ENCODE measurements at regions of chr1 and their contacts with region 1.

Region 1: DNA sequence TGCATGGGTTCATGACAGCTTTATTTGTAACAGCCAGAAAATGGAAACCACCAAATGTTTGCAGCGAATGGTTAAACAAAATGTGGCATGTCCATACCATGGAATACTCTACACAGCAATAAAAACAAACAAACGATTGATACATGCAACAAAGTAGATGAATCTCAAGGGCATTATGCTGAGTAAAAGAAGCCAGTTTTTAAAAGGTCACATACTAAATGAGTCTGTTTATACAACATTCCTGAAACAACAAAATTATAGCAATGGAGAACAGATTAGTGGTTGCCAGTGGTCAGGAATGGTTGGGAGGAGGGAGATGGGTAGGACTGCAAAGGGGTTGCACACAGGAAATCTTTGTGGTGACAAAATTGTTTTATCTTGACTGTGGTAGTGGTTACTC is 202.4 kb upstream of the UBE2U start:
- DNase-seq: no peak
- H3K4me3 Mint-ChIP-seq: no peak overlapping the region
- H3K27ac Mint-ChIP-seq: no peak overlapping the region
- H3K4me1 Mint-ChIP-seq: no peaks in the 10 kb centered on the region
- H3K27me3 Mint-ChIP-seq: peaks cover 8% of the 10 kb centered on the region

Region 2: GRCh38 chr1:64038965-64039926 is 38.2 kb after region 1 on chr1:
- CTCF ChIA-PET with region 1: no interaction called
- POLR2A ChIA-PET with region 1: no interaction called
- intact Hi-C with region 1: loop called (anchors 1 kb)
- DNase-seq: no peak
- H3K4me3 Mint-ChIP-seq: no peak overlapping the region
- H3K27ac Mint-ChIP-seq: no peak overlapping the region
- H3K4me1 Mint-ChIP-seq: no peaks in the 10 kb centered on the region
- H3K27me3 Mint-ChIP-seq: peaks cover 6% of the 10 kb centered on the region

Measured in activated CD4-positive, alpha-beta memory T cell treated with anti-CD3 and anti-CD28 coated beads for 36 hours (primary cell).